HEK293 (cell line): ENCODE measurements at regions of chr2 and their contacts with region 1.

Region 1: GRCh38 chr2:20635675-20636584 is 15.0 kb downstream of the HS1BP3 start:
- H3K4me3 ChIP-seq: no peak overlapping the region
- H3K27ac ChIP-seq: no peak overlapping the region
- H3K4me1 ChIP-seq: 0 out of 2 replicates have a peak, but pooled peaks cover 5% of the 10 kb centered on the region
- CTCF ChIP-seq: peak; percentile 89

Region 2: DNA sequence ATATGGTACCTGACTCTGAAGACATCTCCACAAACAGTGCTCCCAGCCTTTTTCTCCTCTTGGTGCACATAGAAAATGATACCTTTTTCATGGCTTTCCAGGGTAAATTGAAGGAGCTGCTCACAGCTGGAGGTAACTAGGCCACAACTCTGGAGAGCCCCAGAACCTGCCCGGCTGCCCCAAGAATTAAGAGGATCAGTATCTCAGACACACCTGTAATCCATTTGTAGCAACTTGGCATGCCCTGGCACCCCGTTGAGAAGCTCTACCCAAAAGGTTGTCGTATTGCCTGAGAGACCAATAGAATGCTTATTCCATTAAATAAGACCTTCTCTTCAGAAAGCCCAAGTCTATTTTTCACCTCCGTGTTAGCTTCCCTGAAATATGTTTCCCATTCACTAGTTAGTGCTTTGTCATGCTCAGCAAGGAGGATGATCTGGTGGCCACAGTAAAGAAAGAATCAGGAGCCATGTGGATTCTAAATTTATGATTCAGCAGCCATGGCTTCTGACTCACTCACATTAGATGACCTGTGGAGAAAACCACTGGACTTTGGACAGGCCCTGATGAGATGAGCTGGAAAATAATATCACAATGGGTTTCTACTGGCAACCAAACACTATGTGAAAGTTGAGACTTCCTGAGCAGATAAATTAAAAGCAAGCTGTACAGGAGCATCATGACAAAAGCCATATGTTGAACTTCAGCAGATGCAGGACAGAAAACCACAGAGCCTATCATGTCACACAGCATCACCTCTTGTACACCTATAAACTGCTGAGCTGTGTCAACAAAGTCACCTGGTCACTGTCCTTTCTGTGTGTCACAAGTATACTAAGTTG is 1024.2 kb before region 1 on chr2:
- CTCF ChIA-PET with region 1: no interaction called
- POLR2A ChIA-PET with region 1: no interaction called
- H3K4me3 ChIP-seq: no peak overlapping the region
- H3K27ac ChIP-seq: no peak overlapping the region
- H3K4me1 ChIP-seq: no peaks in the 10 kb centered on the region; the same call in 1 of the 2 replicates
- CTCF ChIP-seq: no peak

Region 3: DNA sequence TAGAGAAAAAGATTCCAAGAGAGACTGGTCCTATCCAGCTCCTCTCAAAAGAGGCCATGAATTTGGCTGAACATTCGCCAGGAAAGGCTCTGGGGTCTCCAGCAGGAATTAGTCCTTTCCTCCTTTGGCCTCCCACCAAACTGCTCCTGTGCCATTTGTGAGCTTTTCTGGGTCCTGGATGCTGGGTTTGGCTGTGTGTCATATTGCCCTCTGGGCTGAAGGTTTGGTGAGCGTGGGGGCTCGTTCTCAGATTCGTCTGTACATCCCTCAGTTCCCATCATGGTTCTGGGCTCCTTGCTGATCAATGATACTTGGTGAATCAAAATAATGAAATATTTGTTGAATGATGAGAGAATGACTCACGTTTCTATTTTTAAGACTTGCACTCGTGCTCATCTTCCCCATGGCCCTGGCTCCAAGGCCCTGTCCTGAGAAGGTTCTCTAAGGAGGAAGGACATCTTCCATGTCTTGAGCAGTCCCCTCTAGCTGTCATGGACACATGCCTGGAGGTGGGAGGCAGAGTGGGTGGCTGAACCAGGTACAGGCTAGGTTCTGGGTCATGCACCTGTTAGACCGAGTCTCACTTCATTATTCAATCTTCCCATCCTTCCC is 236.9 kb before region 1 on chr2:
- CTCF ChIA-PET with region 1: interaction called, 10 read pairs
- POLR2A ChIA-PET with region 1: no interaction called
- H3K4me3 ChIP-seq: no peak overlapping the region
- H3K27ac ChIP-seq: no peak overlapping the region
- H3K4me1 ChIP-seq: no peaks in the 10 kb centered on the region
- CTCF ChIP-seq: no peak

Region 4: DNA sequence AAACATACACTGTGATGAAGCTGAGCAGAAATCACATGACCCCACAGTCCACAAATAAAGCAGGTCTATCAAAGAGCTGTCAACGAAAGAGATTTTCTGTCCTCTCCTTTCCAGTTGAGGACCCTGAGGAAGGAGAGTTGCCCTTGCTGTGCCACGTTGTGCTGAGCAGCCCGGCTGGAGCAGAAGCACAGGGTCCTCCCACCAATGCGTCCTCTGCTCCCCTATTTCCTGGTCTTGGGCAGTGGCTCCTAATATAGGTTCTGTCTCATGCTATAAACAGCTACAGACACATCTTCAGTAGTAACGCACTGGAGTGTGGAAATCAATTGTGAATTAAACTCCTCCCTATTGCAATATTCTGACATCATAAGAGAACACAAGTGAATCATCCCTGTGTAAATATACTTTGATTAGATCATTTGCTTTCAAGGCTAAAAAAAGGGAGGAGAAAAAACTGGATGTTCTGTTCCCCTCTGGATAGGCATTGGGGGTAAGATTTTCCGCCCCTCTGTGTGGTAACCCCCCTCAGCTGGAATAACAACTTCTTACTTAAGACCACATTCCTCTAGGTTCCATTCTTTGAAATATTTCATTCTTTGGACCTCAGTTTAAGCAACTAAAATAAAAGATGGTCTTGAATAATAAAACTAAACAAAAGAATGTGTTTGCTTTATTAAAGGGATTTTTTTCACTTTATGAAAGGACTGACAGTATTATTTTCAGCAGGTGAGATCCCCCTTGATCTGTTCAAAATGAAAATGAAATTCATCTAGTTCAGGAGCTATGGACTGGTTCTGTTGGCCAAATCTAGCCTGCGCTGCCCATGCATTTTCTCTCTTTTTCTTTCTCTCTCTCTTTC is 197.4 kb before region 1 on chr2:
- CTCF ChIA-PET with region 1: interaction called, 93 read pairs
- POLR2A ChIA-PET with region 1: interaction called, 3 read pairs
- H3K4me3 ChIP-seq: peak overlapping the region; percentile 2
- H3K27ac ChIP-seq: no peak overlapping the region
- H3K4me1 ChIP-seq: 0 out of 2 replicates have a peak, but pooled peaks cover 2% of the 10 kb centered on the region
- CTCF ChIP-seq: no peak

Region 5: GRCh38 chr2:20452551-20452950 is 183.4 kb before region 1 on chr2:
- CTCF ChIA-PET with region 1: interaction called, 85 read pairs
- POLR2A ChIA-PET with region 1: interaction called, 130 read pairs
- H3K4me3 ChIP-seq: no peak overlapping the region
- H3K27ac ChIP-seq: no peak overlapping the region
- H3K4me1 ChIP-seq: peaks cover 6% of the 10 kb centered on the region
- CTCF ChIP-seq: peak; percentile 27; the same call in 1 of the 2 replicates

Region 6: DNA sequence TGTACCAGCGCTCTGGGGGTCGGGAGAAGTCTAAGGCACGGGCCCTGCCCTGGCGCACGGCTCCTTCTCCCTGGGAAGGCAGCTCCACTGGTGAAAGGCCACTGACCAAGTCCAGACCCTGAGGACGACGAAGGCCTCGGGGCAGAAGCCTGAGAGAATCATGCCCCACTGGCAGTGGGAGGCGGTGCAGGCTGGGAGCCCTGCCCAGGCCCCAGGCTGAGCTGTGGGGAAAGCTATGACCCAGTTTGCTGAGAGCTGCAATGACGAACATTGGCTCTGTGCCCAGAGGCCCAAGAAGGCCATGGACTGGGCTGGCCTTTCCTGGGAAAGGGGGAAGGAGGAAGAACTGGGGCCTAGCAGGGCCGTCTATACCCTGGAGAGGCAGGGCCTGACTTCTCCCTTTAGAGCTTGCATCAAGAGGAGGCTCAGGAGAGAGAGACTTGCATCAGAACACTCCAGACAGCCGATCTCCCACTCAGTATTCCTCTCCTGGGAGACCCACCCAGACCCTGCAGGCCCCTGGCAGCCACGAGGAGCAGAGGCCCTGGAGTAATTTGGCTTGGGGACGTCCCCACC is 17.9 kb before region 1 on chr2:
- CTCF ChIA-PET with region 1: interaction called, 19 read pairs
- POLR2A ChIA-PET with region 1: interaction called, 3 read pairs
- H3K4me3 ChIP-seq: no peak overlapping the region
- H3K27ac ChIP-seq: no peak overlapping the region; the same call in 1 of the 2 replicates
- H3K4me1 ChIP-seq: peaks cover 7% of the 10 kb centered on the region; the same call in 1 of the 2 replicates
- CTCF ChIP-seq: 0 out of 2 replicates have a peak, but pooled peaks have one; percentile 27

Region 7: GRCh38 chr2:20625491-20626391 is 10.2 kb before region 1 on chr2:
- CTCF ChIA-PET with region 1: interaction called, 17 read pairs
- POLR2A ChIA-PET with region 1: no interaction called
- H3K4me3 ChIP-seq: no peak overlapping the region
- H3K27ac ChIP-seq: no peak overlapping the region
- H3K4me1 ChIP-seq: no peaks in the 10 kb centered on the region
- CTCF ChIP-seq: no peak

Region 8: GRCh38 chr2:20650880-20651730 is 15.2 kb after region 1 on chr2 and contains the start of gene HS1BP3:
- CTCF ChIA-PET with region 1: interaction called, 21 read pairs
- POLR2A ChIA-PET with region 1: interaction called, 4 read pairs
- H3K4me3 ChIP-seq: peak within 1 kb of the TSS; percentile 66
- H3K27ac ChIP-seq: peak within 1 kb of the TSS; percentile 43; the same call in 1 of the 2 replicates
- H3K4me1 ChIP-seq: no peaks in the 10 kb centered on the region
- CTCF ChIP-seq: no peak; the same call in 1 of the 2 replicates

Region 9: GRCh38 chr2:21010813-21011439 is 375.0 kb after region 1 on chr2:
- CTCF ChIA-PET with region 1: no interaction called
- POLR2A ChIA-PET with region 1: no interaction called
- H3K4me3 ChIP-seq: no peak overlapping the region
- H3K27ac ChIP-seq: no peak overlapping the region
- H3K4me1 ChIP-seq: no peaks in the 10 kb centered on the region
- CTCF ChIP-seq: no peak